SK-N-SH (cell line): ENCODE measurements at regions of chr7 and their contacts with region 1.

Region 1: GRCh38 chr7:27150568-27151340 is 1.6 kb downstream of the HOXA3 start:
- DNase-seq: peak; percentile 96
- H3K4me3 ChIP-seq: peak overlapping the region; percentile 32 to 63
- H3K27ac ChIP-seq: no peak overlapping the region
- H3K4me1 ChIP-seq: peaks cover 0 to 9% of the 10 kb centered on the region in 2 experiments; a peak in 1 of 4 replicates
- H3K27me3 ChIP-seq: peaks cover 100% of the 10 kb centered on the region
- CTCF ChIP-seq: peak; percentile 91
- EP300 ChIP-seq: peak in 1 of 2 experiments; percentile 40; a peak in 1 of 4 replicates
- RAD21 ChIP-seq: peak; percentile 51

Region 2: DNA sequence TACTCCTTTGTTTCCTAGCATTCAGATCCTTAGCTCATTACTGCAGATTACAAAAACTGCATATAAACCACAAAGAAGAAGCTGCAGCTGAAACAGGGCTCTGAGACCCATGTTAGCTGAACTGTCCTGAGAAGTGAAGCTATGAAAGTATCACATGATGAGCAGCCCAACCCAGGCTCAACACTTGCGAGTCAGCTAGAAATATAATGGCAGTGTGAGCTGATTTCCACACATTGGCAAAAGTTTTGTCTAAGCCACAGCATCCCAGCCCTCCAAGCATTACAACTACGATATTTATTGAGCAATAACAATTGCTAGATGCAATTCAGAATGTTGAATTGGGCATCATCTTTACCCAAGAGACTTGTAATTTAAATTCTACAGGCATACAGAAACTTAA is 251.9 kb before region 1 on chr7:
- CTCF ChIA-PET with region 1: no interaction called
- POLR2A ChIA-PET with region 1: no interaction called
- DNase-seq: no peak
- H3K4me3 ChIP-seq: no peak overlapping the region
- H3K27ac ChIP-seq: no peak overlapping the region
- H3K4me1 ChIP-seq: no peaks in the 10 kb centered on the region
- H3K27me3 ChIP-seq: peaks cover 5% of the 10 kb centered on the region; the same call in 1 of the 2 replicates
- CTCF ChIP-seq: no peak
- EP300 ChIP-seq: no peak
- RAD21 ChIP-seq: no peak

Region 3: DNA sequence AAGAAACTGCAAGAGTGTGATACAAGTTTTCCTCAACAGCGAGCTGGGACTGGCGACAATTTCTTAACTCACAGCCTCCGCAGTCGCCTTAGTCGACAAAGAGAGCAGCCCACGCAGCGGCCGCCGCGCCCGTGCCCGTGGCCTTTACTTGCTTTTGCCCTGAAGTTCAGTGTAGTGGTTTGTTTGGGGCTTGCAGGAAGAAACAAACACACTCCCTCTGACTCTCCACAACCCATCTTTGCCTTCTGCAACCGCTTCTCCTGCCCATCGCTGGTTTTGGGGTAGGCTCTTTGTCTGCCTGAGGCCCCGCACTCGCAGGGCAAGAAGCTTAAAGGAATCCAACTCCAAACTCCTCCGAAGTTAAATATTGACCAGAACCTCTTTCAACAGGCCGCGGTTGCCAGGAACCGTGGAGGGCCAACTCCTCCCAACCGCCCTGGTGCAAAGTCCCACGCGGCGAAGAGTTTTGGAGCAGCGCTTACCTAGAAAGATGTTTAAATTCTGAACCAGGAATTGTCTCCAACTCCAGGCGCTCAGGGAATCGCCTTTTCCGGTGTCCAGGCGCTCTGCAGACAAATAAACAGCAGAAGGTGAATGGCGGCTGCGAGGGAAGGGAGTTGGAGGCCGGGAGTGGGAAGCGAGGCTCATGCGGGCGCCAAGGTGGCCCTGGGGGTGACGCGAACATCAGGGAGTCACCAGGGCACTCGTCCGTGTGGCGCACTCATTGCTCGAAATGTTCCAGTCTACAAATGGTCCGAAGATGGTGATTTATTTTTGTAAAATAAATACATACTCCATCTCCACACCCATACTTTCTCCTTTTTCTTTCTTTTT is 28.5 kb before region 1 on chr7:
- CTCF ChIA-PET with region 1: interaction called, 13 read pairs
- POLR2A ChIA-PET with region 1: no interaction called
- DNase-seq: no peak
- H3K4me3 ChIP-seq: no peak overlapping the region
- H3K27ac ChIP-seq: no peak overlapping the region
- H3K4me1 ChIP-seq: no peaks in the 10 kb centered on the region
- H3K27me3 ChIP-seq: peaks cover 98% of the 10 kb centered on the region
- CTCF ChIP-seq: no peak
- EP300 ChIP-seq: no peak
- RAD21 ChIP-seq: no peak

Region 4: DNA sequence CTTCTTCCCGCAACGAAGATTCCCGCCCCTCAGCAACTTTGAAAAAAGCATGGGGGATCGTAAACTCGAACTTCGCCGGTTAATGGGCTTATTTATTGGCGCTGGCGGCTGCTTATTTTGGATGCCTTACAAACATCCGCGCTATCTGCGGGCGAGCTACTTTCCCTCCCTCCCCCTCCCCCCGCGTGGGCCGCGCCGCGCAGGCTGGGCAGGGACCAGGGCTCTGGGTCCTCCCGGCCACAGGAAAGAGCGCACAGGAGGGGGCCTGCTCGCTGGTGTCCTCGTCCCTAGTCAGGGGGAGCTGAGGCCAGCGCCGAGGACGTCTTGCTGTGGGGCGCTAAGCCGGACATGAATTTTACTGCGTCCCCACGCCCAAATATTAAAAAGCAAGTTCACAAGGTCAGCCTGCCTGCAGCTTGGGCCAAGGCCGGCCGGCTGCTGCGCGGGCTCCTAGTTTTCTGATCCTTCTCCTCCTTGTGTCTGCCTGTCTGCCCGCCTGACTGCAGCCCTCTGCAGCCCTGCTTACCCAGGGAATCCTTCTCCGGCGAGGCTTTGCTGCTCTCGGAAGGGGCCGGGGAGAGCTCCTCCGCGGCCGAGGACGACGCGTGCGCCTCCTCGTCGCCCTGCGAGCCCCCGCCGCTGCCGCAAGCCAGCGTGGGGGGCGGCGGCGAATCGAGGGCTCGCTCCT is 22.2 kb after region 1 on chr7:
- CTCF ChIA-PET with region 1: interaction called, 58 read pairs
- POLR2A ChIA-PET with region 1: no interaction called
- DNase-seq: peak; percentile 66
- H3K4me3 ChIP-seq: peak overlapping the region in 1 of 2 experiments; percentile 14; a peak in 3 of 4 replicates
- H3K27ac ChIP-seq: no peak overlapping the region
- H3K4me1 ChIP-seq: peaks cover 0 to 2% of the 10 kb centered on the region in 2 experiments; a peak in 1 of 4 replicates
- H3K27me3 ChIP-seq: peaks cover 100% of the 10 kb centered on the region
- CTCF ChIP-seq: no peak
- EP300 ChIP-seq: no peak
- RAD21 ChIP-seq: no peak